ENCODE measurements at regions of chrX and their contacts with region 1.

Region 1: DNA sequence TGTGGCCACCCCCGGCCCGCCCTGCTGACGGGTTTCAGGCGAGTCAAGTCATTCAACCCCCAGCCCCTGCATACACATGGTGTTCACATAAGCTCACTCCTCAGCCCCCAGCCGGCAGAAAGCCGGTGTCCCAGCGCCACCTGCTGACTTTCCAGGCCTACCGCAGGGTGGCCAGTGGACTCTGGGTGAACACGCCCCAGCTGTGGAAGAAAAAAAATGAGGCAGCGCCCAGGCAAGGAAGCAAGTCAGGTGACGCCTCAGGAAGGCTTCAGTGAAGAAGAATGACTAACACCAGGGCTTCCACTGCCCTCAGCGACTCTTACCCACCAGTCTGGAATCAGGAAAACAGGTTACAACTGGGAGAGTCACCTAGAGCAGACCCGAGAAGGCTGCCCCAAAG is 15.8 kb downstream of the BCAP31 start:
- DNase-seq: peak; percentile 53 to 60
- ATAC-seq: peak; percentile 53 to 75 (median 68)
- H3K4me3 ChIP-seq: no peak overlapping the region
- H3K27ac ChIP-seq: no peak overlapping the region
- H3K4me1 ChIP-seq: peaks cover 0 to 39% (median under 1%) of the 10 kb centered on the region in 9 donors
- H3K27me3 ChIP-seq: peaks cover 0 to 7% (median 0%) of the 10 kb centered on the region in 7 donors
- CTCF ChIP-seq: peak; percentile 26 to 69 (median 62)

Region 2: GRCh38 chrX:153599192-153600031 is 109.0 kb before region 1 on chrX:
- intact Hi-C with region 1: loop called in 1 of 10 experiments (anchors 5 kb)
- DNase-seq: peak; percentile 84 to 92
- ATAC-seq: peak; percentile 94 to 98 (median 96)
- H3K4me3 ChIP-seq: peak overlapping the region; percentile 27 to 75 (median 68)
- H3K27ac ChIP-seq: peak overlapping the region in 9 of 10 donors; percentile 44 to 83 (median 70)
- H3K4me1 ChIP-seq: peaks cover 0 to 25% (median 10%) of the 10 kb centered on the region in 9 donors
- H3K27me3 ChIP-seq: no peaks in the 10 kb centered on the region
- CTCF ChIP-seq: no peak

Measured in heart right ventricle (tissue), 16 donors.